ENCODE measurements at regions of chr3 and their contacts with region 1.

Region 1: GRCh38 chr3:125019271-125019670 is 36.5 kb downstream of the HEG1 start:
- DNase-seq: no peak
- H3K4me3 ChIP-seq: no peak overlapping the region
- H3K27ac ChIP-seq: no peak overlapping the region
- H3K4me1 ChIP-seq: no peaks in the 10 kb centered on the region
- H3K27me3 ChIP-seq: no peaks in the 10 kb centered on the region
- CTCF ChIP-seq: no peak
- POLR2A ChIP-seq: no peak

Region 2: GRCh38 chr3:125057186-125057850 is 38.0 kb after region 1 on chr3:
- intact Hi-C with region 1: loop called (anchors 1 kb)
- DNase-seq: no peak
- H3K4me3 ChIP-seq: no peak overlapping the region
- H3K27ac ChIP-seq: peak overlapping the region; percentile 52 to 96
- H3K4me1 ChIP-seq: peaks cover 4 to 9% of the 10 kb centered on the region in 2 donors
- H3K27me3 ChIP-seq: no peaks in the 10 kb centered on the region
- CTCF ChIP-seq: no peak
- POLR2A ChIP-seq: no peak

Region 3: GRCh38 chr3:126415661-126416591 is 1396.7 kb after region 1 on chr3:
- intact Hi-C with region 1: no loop called
- DNase-seq: peak in 1 of 2 donors; percentile 46
- H3K4me3 ChIP-seq: no peak overlapping the region
- H3K27ac ChIP-seq: no peak overlapping the region
- H3K4me1 ChIP-seq: no peaks in the 10 kb centered on the region
- H3K27me3 ChIP-seq: peaks cover 0 to 43% of the 10 kb centered on the region in 2 donors
- CTCF ChIP-seq: no peak
- POLR2A ChIP-seq: no peak

Region 4: GRCh38 chr3:126883241-126883640 is 1864.0 kb after region 1 on chr3:
- intact Hi-C with region 1: no loop called
- DNase-seq: peak in 1 of 2 donors; percentile 31
- H3K4me3 ChIP-seq: no peak overlapping the region
- H3K27ac ChIP-seq: no peak overlapping the region
- H3K4me1 ChIP-seq: no peaks in the 10 kb centered on the region
- H3K27me3 ChIP-seq: no peaks in the 10 kb centered on the region
- CTCF ChIP-seq: no peak
- POLR2A ChIP-seq: no peak